ENCODE measurements at regions of chr20 and their contacts with region 1.

Region 1: GRCh38 chr20:45283548-45284057 is 23.0 kb upstream of the RBPJL start:
- DNase-seq: no peak
- H3K4me3 ChIP-seq: no peak overlapping the region
- H3K27ac ChIP-seq: no peak overlapping the region
- H3K4me1 ChIP-seq: no peaks in the 10 kb centered on the region
- H3K27me3 ChIP-seq: no peaks in the 10 kb centered on the region
- CTCF ChIP-seq: no peak
- POLR2A ChIP-seq: no peak

Region 2: DNA sequence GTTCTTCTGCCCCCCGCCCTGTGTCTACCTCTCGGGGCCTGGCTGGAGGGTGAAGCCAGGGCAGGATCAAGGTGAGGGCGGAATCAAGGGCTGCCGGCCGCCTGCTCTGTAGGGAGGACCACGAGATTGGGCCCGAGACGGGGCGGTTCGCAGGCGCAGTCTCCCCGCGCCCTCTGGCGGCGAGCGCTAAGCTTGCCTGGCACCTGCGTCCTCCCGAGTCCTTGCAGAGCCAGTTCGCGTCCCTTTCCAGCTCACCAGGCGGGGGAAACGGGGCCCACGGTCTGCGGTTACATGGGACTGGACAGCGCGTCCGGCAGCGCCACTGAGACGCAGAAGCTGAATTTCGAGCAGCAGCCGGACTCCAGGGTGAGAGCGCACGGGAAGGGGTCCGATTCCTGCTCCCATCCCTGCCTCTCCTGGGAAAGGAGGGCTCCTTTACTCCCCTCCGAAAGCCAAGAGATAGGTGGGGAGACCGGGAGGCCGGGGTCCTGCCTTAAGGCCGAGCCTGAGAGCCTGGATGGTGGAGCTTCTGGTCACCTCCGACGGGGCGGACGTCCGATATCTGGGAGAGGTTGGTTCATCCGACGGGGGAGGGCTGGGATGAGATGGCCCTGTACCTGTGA is 28.1 kb after region 1 on chr20:
- intact Hi-C with region 1: no loop called
- DNase-seq: no peak
- H3K4me3 ChIP-seq: no peak overlapping the region
- H3K27ac ChIP-seq: no peak overlapping the region
- H3K4me1 ChIP-seq: peaks cover 0 to 5% of the 10 kb centered on the region in 2 donors
- H3K27me3 ChIP-seq: peaks cover 3 to 31% of the 10 kb centered on the region in 2 donors
- CTCF ChIP-seq: peak; percentile 37 to 66 (median 55)
- POLR2A ChIP-seq: no peak

Region 3: DNA sequence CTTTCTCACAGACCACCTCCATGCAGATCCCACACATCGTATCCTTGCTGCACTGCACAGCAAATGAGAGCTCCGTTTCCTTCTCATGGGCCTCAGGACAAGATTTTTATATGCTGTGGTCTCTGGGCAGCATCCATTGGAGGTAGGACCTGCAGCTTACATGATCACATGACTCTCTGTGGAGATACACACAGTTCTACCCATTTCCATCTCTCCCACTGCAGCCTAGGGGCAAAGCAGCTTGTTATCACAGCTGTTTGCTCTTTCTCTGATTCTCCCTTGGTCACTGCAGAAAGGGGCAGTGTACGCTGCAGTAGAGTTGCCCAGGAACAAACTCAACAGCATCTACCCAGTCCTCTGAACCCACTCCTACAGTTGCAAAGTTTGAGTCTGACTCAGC is 1180.8 kb after region 1 on chr20:
- intact Hi-C with region 1: loop called (anchors 5 kb)
- DNase-seq: no peak
- H3K4me3 ChIP-seq: no peak overlapping the region
- H3K27ac ChIP-seq: no peak overlapping the region
- H3K4me1 ChIP-seq: no peaks in the 10 kb centered on the region
- H3K27me3 ChIP-seq: no peaks in the 10 kb centered on the region
- CTCF ChIP-seq: no peak
- POLR2A ChIP-seq: no peak

Region 4: DNA sequence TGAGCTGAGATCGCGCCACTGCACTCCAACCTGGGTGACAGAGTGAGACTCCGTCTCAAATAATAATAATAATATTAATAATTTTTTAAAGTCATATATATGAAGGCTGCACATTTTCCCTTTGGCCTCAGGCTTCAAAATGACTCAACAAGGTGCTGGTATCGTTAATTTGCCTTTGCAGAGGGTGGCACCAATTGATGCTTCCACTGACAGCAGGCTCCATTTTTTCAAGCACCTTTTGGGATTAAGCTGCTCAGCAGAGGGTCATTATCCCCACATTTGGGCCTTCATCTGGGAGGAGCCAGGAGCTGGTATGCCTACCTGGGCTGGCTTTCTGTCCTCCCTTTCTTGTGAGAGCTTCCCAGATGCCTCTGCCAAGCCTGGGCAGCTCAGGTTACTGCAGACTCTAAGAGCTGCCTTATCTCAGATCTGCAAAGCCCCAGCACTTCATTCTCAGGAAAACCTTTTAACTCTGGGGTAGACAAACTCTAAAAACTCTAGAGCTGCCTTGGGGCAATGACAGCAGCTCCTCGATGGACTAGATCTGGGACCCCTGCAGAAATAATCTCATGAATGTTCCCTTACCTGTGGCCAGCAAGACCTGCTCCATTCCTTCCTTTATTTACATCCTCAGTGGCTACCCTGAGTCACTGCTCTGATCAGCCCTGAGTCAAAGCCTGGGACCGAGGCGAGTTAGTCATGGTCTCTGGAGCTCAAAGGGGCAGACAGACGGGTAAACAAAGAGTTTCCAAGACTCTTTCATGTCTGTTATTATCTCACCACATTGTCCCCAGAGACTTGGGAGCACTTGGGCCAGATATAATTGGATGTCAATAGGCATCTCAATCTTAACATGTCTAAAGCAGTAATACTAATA is 1531.0 kb after region 1 on chr20:
- intact Hi-C with region 1: no loop called
- DNase-seq: no peak
- H3K4me3 ChIP-seq: no peak overlapping the region
- H3K27ac ChIP-seq: no peak overlapping the region
- H3K4me1 ChIP-seq: no peaks in the 10 kb centered on the region
- H3K27me3 ChIP-seq: peaks cover 3 to 5% of the 10 kb centered on the region in 2 donors
- CTCF ChIP-seq: no peak
- POLR2A ChIP-seq: no peak